Esophagus muscularis mucosa (tissue), 4 donors: ENCODE measurements at regions of chr3 and their contacts with region 1.

Region 1: DNA sequence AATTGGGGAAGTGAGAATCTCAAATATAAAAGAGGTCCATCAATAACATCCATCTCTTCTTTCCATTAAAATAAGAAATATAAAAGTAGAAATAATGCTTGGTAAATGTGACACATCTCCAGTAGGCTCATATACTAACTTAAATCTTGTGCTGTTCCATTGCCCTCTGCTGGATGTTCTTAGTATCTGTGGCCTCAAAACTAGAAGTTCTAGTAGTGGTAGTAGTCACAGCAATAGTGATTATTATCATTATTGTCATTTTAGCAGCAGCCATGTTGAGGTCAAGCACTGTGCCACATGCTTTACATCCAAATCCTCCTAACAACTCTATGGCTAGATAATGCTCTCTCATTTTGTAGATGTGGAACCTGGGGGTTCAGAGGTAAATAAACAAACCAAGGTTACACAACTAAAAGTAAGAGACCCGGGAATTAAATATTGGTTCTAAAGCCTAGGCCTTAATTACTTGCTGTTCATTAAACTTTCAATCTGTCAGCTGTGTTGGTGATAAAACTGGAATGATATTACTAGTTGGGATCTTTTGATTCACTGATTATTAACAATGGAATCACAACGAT is 20.2 kb upstream of the BTLA start:
- DNase-seq: no peak
- H3K4me3 ChIP-seq: no peak overlapping the region
- H3K27ac ChIP-seq: no peak overlapping the region
- H3K4me1 ChIP-seq: no peaks in the 10 kb centered on the region
- H3K27me3 ChIP-seq: no peaks in the 10 kb centered on the region
- CTCF ChIP-seq: peak; percentile 65 to 76 (median 74)
- EP300 ChIP-seq: no peak
- POLR2A ChIP-seq: no peak

Region 2: GRCh38 chr3:112327371-112327951 is 192.1 kb before region 1 on chr3:
- intact Hi-C with region 1: loop called (anchors 1 kb)
- DNase-seq: no peak
- H3K4me3 ChIP-seq: no peak overlapping the region
- H3K27ac ChIP-seq: no peak overlapping the region
- H3K4me1 ChIP-seq: peaks cover 0 to 5% (median 3%) of the 10 kb centered on the region in 4 donors
- H3K27me3 ChIP-seq: no peaks in the 10 kb centered on the region
- CTCF ChIP-seq: peak; percentile 57 to 62 (median 60)
- EP300 ChIP-seq: no peak
- POLR2A ChIP-seq: no peak

Region 3: DNA sequence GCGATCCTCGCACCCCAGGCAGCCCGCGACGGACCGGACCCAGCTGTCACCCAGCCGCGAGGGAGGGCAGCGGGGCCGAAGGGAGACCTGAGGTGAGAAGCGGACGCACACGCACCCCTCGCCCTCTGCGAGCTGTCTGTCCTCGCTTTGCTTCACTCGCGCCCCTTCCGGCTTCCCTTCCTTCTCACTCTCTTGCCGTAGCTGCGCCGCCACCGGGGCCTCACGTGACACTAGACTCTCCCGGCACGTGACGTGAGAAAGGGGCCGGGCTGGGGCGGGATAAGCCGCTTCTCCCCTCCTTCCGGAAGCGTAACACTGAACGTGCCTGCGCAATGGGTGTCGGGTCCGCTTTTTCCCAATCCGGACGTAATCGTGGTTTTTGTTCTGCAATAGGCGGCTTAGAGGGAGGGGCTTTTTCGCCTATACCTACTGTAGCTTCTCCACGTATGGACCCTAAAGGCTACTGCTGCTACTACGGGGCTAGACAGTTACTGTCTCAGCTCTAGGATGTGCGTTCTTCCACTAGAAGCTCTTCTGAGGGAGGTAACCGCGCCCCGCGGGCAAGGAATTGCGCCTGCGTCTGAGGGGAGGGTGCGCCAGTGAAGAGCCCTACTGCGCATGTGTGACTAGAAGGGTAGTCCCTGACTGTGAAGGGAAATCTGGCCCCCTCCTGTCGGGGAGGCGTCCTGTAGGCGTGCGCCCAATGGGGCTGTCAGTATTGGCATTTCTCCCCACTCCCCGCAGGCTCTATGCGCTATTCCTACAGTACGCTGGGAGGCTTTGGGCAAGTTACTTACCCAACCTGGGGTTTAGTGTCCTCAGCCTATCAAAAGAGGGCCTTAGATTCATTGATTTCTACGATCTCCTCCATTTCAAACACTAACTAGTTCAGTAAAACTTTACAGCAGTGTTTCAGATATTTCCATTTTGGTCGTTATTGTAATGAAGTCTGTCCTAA is 42.5 kb after region 1 on chr3 and contains the starts of genes ATG3 and SLC35A5:
- intact Hi-C with region 1: no loop called
- DNase-seq: peak; percentile 100
- H3K4me3 ChIP-seq: peak within 1 kb of the TSS; percentile 84 to 95 (median 90)
- H3K27ac ChIP-seq: peak within 1 kb of the TSS; percentile 94 to 98 (median 94)
- H3K4me1 ChIP-seq: peaks cover 22 to 44% (median 39%) of the 10 kb centered on the region in 4 donors
- H3K27me3 ChIP-seq: no peaks in the 10 kb centered on the region
- CTCF ChIP-seq: no peak
- EP300 ChIP-seq: no peak
- POLR2A ChIP-seq: peak; percentile 40
- total RNA-seq, gene ATG3: 41.3 to 60.3 (median 57.2) TPM
- total RNA-seq, gene SLC35A5: 18.6 to 28.7 (median 22.8) TPM